ENCODE measurements at regions of chr1 and their contacts with region 1.

Region 1: DNA sequence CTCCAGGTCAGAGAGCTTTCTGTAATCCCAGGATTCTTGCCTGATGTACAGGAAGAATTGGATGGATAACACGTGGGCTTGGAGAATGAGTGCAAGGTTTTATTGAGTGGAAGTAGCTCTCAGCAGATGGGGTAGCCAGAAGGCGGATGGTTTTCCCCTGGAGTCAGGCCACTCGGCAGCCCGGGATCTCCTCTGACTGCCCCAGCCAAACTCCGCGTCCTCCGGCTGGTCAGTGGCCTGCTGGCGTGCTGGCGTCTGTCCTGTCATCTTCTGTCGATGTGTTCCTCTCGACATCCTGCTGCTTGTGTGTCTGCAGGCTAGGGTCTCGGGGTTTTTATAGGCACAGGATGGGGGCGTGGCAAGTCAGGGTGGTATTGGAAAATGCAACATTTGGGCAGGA is 27.4 kb upstream of the GJA9 start:
- DNase-seq: no peak
- H3K4me3 ChIP-seq: no peak overlapping the region
- H3K27ac ChIP-seq: no peak overlapping the region
- H3K4me1 ChIP-seq: no peaks in the 10 kb centered on the region
- H3K27me3 ChIP-seq: no peaks in the 10 kb centered on the region
- CTCF ChIP-seq: no peak
- POLR2A ChIP-seq: no peak

Region 2: DNA sequence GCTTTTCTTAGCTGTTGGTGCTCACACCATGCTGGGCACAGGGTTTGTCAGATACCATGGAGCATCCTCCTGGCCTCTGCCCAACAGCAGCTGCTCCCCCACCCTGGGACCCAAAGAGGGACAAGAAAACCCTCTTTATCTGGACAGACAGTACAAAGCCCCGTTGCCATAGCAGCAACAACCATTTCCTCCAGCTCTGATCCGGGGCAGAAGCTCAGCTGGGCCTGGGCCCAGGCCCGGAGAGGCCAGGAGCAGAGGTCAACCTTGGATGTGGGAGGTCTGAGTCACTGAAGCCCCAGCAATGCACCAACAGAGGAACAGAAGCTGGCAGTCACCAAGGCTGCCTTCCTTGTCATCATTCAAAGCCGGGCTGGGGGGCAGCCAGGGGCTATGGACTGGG is 633.8 kb before region 1 on chr1:
- intact Hi-C with region 1: loop called (anchors 5 kb)
- DNase-seq: no peak
- H3K4me3 ChIP-seq: no peak overlapping the region
- H3K27ac ChIP-seq: no peak overlapping the region
- H3K4me1 ChIP-seq: no peaks in the 10 kb centered on the region
- H3K27me3 ChIP-seq: peaks cover 0 to 10% of the 10 kb centered on the region in 2 donors
- CTCF ChIP-seq: no peak
- POLR2A ChIP-seq: no peak

Region 3: GRCh38 chr1:38929476-38929875 is 20.7 kb after region 1 on chr1:
- intact Hi-C with region 1: no loop called
- DNase-seq: no peak
- H3K4me3 ChIP-seq: no peak overlapping the region
- H3K27ac ChIP-seq: no peak overlapping the region
- H3K4me1 ChIP-seq: no peaks in the 10 kb centered on the region
- H3K27me3 ChIP-seq: no peaks in the 10 kb centered on the region
- CTCF ChIP-seq: no peak
- POLR2A ChIP-seq: no peak